ENCODE measurements at regions of chr5 and their contacts with region 1.

Region 1: GRCh38 chr5:29524197-29524596 is 1669.3 kb upstream of the CDH6 start:
- DNase-seq: no peak
- ATAC-seq: no peak

Region 2: GRCh38 chr5:29498412-29498811 is 25.8 kb before region 1 on chr5:
- intact Hi-C with region 1: loop called (anchors 1 kb)
- DNase-seq: no peak
- ATAC-seq: peak; percentile 20

Region 3: DNA sequence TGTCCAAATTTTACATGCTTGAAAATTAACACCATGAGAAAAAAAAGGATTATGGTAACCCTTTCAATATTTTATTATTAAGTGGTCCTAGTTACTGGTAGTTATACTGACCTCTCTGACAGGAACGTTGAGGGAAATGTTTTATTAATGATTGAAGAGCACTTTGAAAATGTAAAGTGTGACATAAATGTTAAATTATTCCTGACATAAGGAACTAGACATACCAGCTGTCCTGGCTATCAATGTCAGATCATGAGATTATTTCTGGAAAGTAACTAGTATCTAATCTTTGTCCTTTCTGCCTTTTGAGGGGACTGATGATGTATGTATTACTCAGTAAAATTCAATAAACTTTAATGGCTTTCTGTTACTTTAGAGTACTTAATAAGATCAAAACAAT is 130.8 kb after region 1 on chr5:
- intact Hi-C with region 1: no loop called
- DNase-seq: no peak
- ATAC-seq: no peak

Region 4: DNA sequence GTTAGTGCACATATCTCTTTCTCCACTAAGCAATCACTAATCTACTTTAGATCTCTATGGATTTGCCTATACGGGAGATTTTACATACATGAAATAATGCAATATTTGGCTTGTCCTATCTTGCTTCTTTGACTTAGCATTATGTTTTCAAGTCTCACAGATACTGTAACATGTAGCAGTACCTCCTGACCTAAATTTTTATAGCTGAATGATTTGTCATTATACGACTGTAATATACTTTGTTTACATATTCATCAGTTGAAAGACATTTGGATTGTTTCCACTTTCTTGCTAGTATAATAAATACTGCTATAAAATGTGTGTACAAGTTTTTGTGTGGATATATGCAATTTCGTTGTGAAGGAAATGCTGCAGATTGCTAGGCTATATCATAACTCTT is 148.5 kb after region 1 on chr5:
- intact Hi-C with region 1: no loop called
- DNase-seq: no peak
- ATAC-seq: no peak

Measured in sciatic nerve (tissue), 2 donors.